ENCODE measurements at regions of chr2 and their contacts with region 1.

Region 1: GRCh38 chr2:231280846-231281245 is 82.4 kb downstream of the ARMC9 start:
- DNase-seq: no peak
- ATAC-seq: no peak
- H3K4me3 Mint-ChIP-seq: no peak overlapping the region
- H3K27ac Mint-ChIP-seq: no peak overlapping the region
- H3K4me1 Mint-ChIP-seq: peaks cover 10% of the 10 kb centered on the region
- H3K27me3 Mint-ChIP-seq: peaks cover 4% of the 10 kb centered on the region

Region 2: DNA sequence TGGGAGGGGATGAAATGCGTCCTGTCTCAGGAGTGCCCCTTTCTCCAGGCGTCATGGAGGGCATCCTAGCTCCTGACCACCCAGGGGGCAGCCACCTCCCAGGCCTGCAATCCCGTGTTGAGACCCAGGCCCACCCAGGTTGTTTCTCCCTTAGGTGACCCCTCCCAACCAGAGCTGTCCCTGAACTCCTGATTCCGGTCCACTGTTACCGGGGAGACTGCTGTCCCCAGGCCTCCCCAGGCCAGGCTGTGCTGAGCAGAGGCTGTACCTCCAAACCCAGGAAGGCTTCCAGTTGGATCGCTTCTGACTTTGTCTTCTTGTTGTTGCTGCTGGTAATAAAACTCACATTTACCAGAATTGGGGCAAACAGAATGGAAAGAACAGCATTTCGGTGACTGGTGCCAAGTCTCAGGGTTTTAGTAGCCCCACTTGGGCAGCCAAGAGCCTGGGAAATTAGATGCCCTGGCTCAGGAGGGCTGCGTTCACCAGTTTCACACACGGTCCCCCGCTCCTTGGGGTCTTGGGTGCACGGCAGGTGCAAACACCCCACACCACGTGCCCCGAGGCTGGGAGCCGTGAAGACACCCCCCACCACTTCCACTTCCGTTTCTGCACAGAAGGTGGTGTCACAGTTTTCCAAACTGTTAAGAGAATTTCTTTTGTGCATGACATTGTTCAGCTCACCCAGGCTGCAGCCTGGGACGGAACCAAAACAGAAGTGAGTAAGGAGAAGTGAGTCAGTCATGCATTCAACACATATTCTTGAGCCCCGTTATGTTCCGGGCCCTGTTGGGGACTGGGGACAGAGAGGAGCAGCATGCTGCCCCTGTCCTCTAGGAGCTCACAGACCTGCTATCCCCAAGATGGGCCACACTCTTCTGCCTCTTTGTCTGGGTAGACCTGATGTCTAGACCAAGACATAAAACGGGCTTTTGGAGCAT is 386.7 kb before region 1 on chr2:
- CTCF ChIA-PET with region 1: no interaction called
- POLR2A ChIA-PET with region 1: no interaction called
- intact Hi-C with region 1: loop called in 1 of 2 experiments (anchors 10 kb)
- DNase-seq: no peak
- ATAC-seq: peak; percentile 68
- H3K4me3 Mint-ChIP-seq: no peak overlapping the region
- H3K27ac Mint-ChIP-seq: no peak overlapping the region
- H3K4me1 Mint-ChIP-seq: peaks cover 16% of the 10 kb centered on the region
- H3K27me3 Mint-ChIP-seq: peaks cover 10% of the 10 kb centered on the region

Region 3: DNA sequence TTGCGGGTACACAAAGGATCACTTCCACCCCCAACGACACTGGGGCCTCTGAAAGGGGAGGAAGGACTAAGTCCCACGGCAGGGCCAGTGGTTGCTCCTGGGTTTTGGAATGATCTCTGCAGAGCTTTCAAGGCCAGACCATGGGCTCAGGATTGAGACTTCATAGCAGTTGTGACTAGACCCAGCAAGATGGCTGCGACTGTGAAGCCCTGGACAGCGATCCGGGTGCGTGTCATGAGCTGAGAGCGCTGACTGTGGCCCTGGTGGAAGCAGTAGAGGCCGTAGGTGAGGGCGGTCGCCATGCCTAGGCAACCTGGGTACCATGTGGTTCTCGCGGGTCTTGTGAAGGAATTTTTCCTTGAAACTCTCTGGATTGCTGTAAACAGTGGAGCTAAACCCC is 156.1 kb after region 1 on chr2:
- CTCF ChIA-PET with region 1: no interaction called
- POLR2A ChIA-PET with region 1: no interaction called
- intact Hi-C with region 1: no loop called
- DNase-seq: no peak
- ATAC-seq: no peak
- H3K4me3 Mint-ChIP-seq: no peak overlapping the region
- H3K27ac Mint-ChIP-seq: no peak overlapping the region
- H3K4me1 Mint-ChIP-seq: peaks cover 8% of the 10 kb centered on the region
- H3K27me3 Mint-ChIP-seq: no peaks in the 10 kb centered on the region

Region 4: GRCh38 chr2:231449503-231450054 is 168.7 kb after region 1 on chr2:
- CTCF ChIA-PET with region 1: no interaction called
- POLR2A ChIA-PET with region 1: no interaction called
- intact Hi-C with region 1: no loop called
- DNase-seq: no peak
- ATAC-seq: no peak
- H3K4me3 Mint-ChIP-seq: no peak overlapping the region
- H3K27ac Mint-ChIP-seq: no peak overlapping the region
- H3K4me1 Mint-ChIP-seq: peaks cover 8% of the 10 kb centered on the region
- H3K27me3 Mint-ChIP-seq: no peaks in the 10 kb centered on the region

Measured in activated CD4-positive, alpha-beta T cell treated with anti-CD3 and anti-CD28 coated beads for 36 hours (primary cell).